ENCODE measurements at regions of chr2 and their contacts with region 1.

Region 1: DNA sequence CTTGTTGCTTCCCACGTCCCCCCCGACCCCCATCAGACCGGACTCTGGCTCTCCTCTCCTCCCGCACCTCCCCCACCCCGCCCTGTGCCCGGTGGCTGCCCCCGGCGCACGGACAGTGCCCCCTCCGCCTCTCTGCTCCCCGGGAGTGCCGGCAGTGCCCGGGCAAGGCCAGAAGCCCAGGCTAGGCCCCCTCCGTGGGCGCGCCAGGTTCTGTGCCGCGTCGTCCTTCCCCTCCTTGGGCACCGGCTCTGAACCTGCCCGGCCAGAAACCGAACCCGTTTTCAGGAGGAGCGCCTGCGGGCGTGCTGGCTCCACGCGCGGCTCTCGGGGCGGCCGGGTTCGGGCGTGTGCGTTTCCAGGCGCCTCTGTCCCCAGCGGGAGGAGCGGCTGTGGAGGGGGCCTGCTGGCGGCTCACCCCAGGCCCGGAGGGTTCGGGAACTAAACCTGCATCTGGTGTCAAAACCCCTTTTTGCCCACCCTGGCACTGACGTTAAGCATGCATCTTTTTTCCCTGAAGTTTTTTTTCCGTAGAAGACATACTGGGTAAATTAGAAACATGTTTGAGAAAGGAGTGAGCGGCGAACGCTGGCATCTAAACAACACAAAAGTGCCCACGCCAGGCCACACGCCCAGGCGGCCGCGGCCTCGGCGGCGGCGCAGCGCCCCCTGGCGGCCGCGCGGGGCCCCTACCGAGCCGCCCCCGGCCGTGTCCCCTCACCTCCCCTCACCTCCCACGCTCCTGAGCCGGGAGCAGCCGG is 123.9 kb upstream of the SLC1A4 start:
- DNase-seq: peak; percentile 70
- ATAC-seq: peak; percentile 88 to 94

Region 2: GRCh38 chr2:64586883-64587481 is 278.3 kb before region 1 on chr2:
- intact Hi-C with region 1: loop called (anchors 2 to 5 kb)
- DNase-seq: no peak
- ATAC-seq: peak; percentile 74 to 76

Region 3: GRCh38 chr2:64594226-64594989 is 270.8 kb before region 1 on chr2:
- intact Hi-C with region 1: loop called in 1 of 2 experiments (anchors 5 kb)
- DNase-seq: no peak
- ATAC-seq: peak in 1 of 2 donors; percentile 10

Region 4: GRCh38 chr2:64644177-64645004 is 220.9 kb before region 1 on chr2:
- intact Hi-C with region 1: loop called (anchors 2 to 10 kb)
- DNase-seq: peak; percentile 89
- ATAC-seq: peak; percentile 92 to 93

Region 5: GRCh38 chr2:64675860-64676259 is 189.4 kb before region 1 on chr2:
- intact Hi-C with region 1: no loop called
- DNase-seq: no peak
- ATAC-seq: peak in 1 of 2 donors; percentile 72

Region 6: DNA sequence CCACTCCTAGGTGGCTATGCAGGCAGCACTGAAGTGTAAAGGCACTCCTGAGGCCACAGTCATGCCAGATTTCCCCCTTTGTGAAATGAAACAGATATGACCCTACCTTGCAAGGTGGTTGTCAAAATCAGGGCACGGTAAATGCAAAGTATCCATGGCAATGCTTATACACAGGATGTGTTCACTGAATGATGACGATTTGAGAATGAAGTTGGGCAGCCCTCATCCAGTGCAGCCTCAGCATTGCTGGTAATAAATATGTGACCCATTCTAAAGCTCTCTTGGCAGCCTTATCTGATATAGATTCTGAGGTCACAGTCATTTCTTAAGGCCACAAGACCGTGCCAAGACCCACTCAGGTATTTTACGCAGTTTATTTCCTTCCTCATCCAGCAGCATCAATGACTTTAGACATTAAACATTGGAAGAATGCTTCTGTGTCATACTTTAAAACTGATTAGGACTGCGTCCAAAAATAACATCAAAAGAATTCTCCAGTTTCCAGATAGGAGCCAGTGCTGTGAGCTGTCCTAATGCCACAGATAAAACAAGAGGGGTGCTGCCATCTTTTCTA is 86.0 kb before region 1 on chr2:
- intact Hi-C with region 1: no loop called
- DNase-seq: no peak
- ATAC-seq: peak; percentile 63 to 83

Region 7: DNA sequence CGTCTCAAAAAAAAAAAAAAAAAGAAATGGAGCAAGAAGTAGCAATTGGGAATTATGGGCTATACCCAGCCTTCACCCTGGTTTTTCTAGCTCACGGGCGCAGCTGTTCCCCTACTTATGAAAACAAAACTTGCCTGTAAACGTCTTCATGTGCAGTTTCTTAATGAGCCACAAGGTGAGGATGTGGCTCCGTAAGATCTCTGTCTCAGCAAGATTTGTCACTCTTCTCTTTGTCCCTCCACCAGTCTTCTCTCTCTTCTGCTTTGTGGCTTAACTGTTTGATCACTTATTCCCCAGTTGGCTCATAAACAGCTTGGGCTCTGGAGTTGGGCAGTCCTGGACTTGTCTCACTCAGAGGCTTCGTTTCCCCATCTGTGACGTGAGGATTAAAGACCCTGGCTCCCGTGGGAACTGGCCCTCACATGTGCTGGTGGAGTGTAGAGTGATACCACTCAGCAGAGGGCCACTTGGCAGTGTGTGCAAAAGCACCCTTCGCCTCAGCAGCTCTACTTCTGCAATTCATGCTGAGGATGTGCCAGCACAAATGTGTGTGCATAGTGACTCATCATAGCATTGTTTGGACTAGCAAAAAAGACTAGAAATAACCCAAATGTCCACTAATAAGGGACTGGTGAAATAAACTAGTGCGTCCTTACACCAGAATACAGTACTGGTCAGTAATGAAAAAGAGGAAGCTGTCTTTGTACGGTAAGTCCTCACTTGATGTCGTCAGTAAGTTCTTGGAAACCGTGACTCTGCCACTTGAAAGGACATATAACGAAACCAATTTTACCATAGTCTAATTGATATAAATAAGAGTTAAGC is 199.7 kb after region 1 on chr2:
- intact Hi-C with region 1: no loop called
- DNase-seq: peak; percentile 80
- ATAC-seq: peak; percentile 85 to 88

Measured in left cardiac atrium (tissue), 4 donors.